T-cell (primary cell): ENCODE measurements at regions of chr10 and their contacts with region 1.

Region 1: DNA sequence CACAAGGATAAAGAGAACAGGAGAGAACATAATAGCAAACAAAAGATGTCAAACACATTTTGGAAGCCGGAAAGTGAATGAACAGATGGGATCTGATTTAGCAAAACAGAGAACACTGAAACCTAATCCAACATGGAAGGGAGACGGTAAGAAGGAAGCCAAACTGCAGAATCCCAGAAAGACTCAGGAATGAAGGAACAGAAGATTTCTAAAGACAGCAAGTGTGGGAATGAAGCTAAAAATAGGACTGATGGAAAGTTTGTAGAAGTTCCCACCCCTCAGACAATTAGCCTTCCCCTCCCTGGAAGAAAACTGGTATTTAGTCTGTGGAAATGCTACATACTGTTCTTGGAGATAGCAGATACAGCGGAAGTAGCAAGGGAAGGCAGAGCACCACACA is 40.8 kb downstream of the SLC16A12 start:
- DNase-seq: no peak
- ATAC-seq: no peak
- H3K4me3 ChIP-seq: no peak overlapping the region
- H3K4me3 Mint-ChIP-seq: no peak overlapping the region
- H3K27ac ChIP-seq: no peak overlapping the region
- H3K27ac Mint-ChIP-seq: no peak overlapping the region
- H3K4me1 ChIP-seq: no peaks in the 10 kb centered on the region
- H3K4me1 Mint-ChIP-seq: no peaks in the 10 kb centered on the region
- H3K27me3 ChIP-seq: peaks cover 0 to 3% of the 10 kb centered on the region in 2 experiments
- H3K27me3 Mint-ChIP-seq: peaks cover 12 to 20% of the 10 kb centered on the region in 2 donors

Region 2: DNA sequence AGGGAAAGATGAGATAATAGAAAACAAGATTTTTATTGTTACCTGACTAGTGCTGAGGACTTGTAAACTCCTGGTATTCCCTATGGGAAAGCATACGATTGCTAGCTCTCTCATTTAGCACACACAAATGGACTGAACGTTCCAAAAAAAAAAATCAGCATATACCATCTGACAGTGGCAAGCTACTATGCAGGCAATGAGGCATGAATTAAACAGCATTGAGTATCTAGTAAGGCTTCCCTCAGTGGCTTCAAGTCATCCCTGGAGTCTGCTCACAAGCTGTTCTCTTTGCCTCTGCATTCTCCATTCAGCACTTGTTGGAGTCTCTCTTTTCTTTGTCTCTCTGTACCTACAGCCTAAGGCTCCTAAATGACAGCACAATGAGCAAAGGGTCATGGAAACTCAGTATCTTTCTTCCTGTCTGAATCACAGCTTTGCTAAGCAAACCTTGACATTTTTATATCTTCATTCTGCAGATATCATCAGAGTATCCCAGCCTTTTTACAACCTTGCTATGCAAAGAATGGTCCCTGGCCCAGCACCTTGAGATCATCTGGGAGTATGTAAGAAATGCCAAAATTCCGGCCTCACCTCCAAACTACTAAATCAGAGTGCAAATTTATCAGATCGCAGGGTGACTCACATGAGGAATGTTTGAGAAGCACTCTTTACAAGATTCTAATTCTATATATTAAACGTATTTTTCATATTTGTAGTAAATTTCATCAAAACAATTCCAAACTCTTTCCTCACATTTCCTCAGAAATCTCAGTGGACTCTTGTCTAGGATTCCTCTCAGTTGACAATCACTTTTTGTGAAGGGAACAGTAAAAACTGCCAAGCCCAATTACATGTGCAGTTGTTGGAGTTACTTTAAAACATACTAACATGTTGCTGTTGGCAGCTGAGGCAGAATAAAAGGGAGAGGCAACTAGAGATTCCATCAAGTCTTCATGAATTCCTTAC is 232.2 kb before region 1 on chr10:
- CTCF ChIA-PET with region 1: no interaction called
- POLR2A ChIA-PET with region 1: no interaction called
- DNase-seq: no peak
- ATAC-seq: no peak
- H3K4me3 ChIP-seq: no peak overlapping the region
- H3K4me3 Mint-ChIP-seq: no peak overlapping the region
- H3K27ac ChIP-seq: no peak overlapping the region
- H3K27ac Mint-ChIP-seq: no peak overlapping the region
- H3K4me1 ChIP-seq: peaks cover 0 to 5% of the 10 kb centered on the region in 2 experiments
- H3K4me1 Mint-ChIP-seq: peaks cover 0 to 4% (median 3%) of the 10 kb centered on the region in 3 donors
- H3K27me3 ChIP-seq: peaks cover 0 to 4% of the 10 kb centered on the region in 2 experiments
- H3K27me3 Mint-ChIP-seq: no peaks in the 10 kb centered on the region

Region 3: DNA sequence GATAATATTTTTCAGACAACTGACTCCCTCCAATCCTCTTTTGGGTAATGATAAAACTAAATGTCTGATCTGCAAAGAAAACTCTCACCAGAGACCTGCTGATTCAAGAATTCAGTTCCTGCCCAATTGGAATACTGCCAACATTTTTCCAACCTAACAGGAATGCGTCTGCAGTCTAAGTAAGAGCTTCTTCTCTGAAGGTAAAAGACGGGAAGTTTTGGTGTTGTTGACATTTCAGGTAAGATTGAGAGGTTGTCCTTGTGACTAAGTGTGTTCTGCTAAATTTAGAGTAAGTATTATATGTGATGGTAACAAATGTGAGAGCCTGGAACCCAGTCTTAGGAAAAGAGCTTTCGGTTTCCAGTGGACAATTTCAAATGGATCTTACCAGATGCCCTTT is 62.6 kb before region 1 on chr10:
- CTCF ChIA-PET with region 1: interaction called in 1 of 2 experiments, 10 read pairs
- POLR2A ChIA-PET with region 1: no interaction called
- DNase-seq: no peak
- ATAC-seq: no peak
- H3K4me3 ChIP-seq: no peak overlapping the region
- H3K4me3 Mint-ChIP-seq: no peak overlapping the region
- H3K27ac ChIP-seq: no peak overlapping the region
- H3K27ac Mint-ChIP-seq: no peak overlapping the region
- H3K4me1 ChIP-seq: no peaks in the 10 kb centered on the region
- H3K4me1 Mint-ChIP-seq: no peaks in the 10 kb centered on the region
- H3K27me3 ChIP-seq: no peaks in the 10 kb centered on the region
- H3K27me3 Mint-ChIP-seq: peaks cover 16 to 19% of the 10 kb centered on the region in 2 donors